ENCODE measurements at regions of chr9 and their contacts with region 1.

Region 1: DNA sequence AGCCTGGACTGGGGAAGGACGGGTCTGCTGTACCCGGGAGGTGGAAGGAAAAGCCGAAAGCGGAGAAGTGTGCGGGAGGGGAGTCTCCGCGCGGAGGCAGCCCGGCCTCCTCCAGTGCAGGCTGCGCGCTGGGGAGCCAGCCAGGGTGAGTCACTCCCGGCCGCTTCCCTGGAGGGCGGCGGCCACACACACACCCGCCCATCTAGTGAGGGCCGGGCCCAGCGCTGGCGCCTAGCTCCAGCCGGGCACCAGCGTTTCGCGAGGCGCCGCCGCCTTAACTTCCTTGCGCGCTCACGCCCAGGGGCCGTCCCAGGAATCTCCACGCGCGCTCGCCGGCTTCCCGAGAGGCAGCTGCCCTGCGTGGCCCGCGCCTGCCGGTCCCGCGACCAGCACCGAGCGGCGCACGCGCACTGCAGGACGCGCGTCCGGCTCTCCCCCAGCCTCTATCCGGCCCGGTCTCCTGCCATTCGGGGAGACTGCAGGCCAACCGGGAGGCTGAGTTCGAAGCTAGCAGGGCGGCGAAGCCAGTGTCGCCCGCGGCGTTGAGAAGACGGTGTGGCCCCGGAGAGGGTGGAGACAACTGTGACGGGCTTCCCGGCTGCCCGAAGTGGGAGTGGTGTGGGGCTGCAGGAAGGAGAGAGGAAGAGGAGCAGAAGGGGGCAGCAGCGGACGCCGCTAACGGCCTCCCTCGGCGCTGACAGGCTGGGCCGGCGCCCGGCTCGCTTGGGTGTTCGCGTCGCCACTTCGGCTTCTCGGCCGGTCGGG is at the start of gene JAK2:
- DNase-seq: peak in 1 of 2 donors; percentile 94
- H3K4me3 ChIP-seq: peak within 1 kb of the TSS; percentile 49 to 66
- H3K27ac ChIP-seq: peak within 1 kb of the TSS; percentile 94
- H3K4me1 ChIP-seq: peaks cover 38% of the 10 kb centered on the region
- H3K27me3 ChIP-seq: no peaks in the 10 kb centered on the region
- CTCF ChIP-seq: peak in 1 of 3 experiments; percentile 10
- POLR2A ChIP-seq: peak in 1 of 2 donors; percentile 51
- total RNA-seq, gene JAK2: 25.8 TPM

Region 2: GRCh38 chr9:4679268-4680172 is 305.3 kb before region 1 on chr9 and contains the start of gene CDC37L1:
- intact Hi-C with region 1: loop called (anchors 10 kb)
- DNase-seq: peak; percentile 98
- H3K4me3 ChIP-seq: peak within 1 kb of the TSS; percentile 77 to 94
- H3K27ac ChIP-seq: peak within 1 kb of the TSS; percentile 98
- H3K4me1 ChIP-seq: peaks cover 33% of the 10 kb centered on the region
- H3K27me3 ChIP-seq: no peaks in the 10 kb centered on the region
- CTCF ChIP-seq: peak in 2 of 3 experiments; percentile 13 to 77
- POLR2A ChIP-seq: peak; percentile 50 to 98
- total RNA-seq, gene CDC37L1: 23.8 TPM

Region 3: DNA sequence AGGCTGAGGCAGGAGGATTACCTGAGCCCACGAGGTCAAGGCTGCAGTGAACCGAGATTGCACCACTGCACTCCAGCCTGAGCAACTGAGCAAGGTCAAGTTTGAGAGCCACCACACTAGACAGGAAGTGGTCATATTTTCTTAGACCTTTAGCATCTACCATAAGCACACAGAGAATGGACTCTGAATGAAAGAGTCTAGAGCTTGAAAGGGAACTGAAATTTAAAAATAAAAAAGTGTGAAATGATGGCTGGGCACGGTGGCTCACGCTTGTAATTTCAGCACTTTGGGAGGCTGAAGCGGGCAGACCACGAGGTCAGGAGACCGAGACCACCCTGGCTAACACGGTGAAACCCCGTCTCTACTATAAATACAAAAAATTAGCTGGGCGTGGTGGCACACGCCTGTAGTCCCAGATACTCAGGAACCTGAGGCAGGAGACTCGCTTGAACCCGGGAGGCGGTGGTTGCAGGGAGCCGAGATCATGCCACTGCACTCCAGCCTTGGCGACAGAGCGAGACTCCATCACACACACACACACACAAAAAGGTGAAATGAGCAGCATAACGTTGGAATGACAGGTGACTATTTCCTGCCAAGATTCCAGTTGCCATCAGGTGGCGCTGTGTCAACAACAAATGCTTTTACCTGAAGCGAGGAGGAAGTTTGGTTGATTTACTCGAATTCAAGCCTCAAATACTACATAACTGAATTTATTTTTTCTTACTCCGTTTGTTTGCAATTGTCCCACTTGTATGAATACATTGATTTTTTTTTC is 222.5 kb before region 1 on chr9:
- intact Hi-C with region 1: loop called (anchors 5 kb)
- DNase-seq: no peak
- H3K4me3 ChIP-seq: peak overlapping the region; percentile 11 to 21
- H3K27ac ChIP-seq: peak overlapping the region; percentile 3
- H3K4me1 ChIP-seq: peaks cover 17% of the 10 kb centered on the region
- H3K27me3 ChIP-seq: no peaks in the 10 kb centered on the region
- CTCF ChIP-seq: peak; percentile 75 to 84 (median 81)
- POLR2A ChIP-seq: no peak

Region 4: DNA sequence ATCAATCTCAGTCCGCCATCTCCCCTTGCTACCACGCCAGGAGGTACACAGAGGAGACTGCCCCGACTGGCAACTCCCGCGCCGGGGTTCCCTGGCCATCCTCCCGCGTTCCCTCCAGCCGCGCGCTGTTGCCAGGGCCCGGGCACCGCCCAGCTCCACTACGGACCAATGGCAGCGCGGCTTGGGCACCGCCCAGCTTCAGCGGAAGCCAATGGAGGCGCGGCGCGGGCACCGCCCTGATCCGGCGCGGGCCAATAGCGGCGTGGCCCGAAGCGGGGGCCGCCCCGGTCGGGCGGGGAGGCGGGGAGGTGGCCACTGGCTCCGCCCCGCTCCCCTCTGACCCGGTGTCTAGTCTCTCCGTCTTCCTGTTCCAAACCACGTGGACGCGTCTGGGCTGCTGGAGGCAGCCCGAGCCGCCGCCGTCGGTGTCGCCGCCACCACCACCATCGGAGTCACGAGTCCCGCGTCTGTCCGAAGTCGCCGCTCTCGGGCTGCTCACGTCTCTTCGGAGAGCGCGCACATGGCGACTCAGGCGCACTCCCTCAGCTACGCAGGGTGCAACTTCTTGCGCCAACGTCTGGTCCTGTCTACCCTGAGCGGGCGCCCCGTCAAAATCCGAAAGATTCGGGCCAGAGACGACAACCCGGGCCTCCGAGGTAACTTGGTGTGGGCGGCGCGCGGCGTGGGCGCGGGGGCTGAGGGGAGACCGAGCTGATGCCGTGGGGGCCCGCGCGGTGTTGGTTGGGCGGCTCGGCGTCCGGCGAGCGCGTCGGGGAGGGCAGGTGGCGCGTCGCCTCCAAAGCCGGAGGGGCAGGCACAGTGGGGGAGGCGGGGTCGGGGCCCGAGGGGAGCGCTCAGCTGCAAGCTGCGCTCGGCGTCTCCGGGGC is 192.0 kb before region 1 on chr9 and contains the start of gene RCL1:
- intact Hi-C with region 1: loop called (anchors 5 kb)
- DNase-seq: peak in 1 of 2 donors; percentile 96
- H3K4me3 ChIP-seq: peak within 1 kb of the TSS; percentile 81 to 89
- H3K27ac ChIP-seq: peak within 1 kb of the TSS; percentile 77
- H3K4me1 ChIP-seq: peaks cover 33% of the 10 kb centered on the region
- H3K27me3 ChIP-seq: no peaks in the 10 kb centered on the region
- CTCF ChIP-seq: no peak
- POLR2A ChIP-seq: peak in 1 of 2 donors; percentile 64
- total RNA-seq, gene RCL1: 24.8 TPM

Region 5: DNA sequence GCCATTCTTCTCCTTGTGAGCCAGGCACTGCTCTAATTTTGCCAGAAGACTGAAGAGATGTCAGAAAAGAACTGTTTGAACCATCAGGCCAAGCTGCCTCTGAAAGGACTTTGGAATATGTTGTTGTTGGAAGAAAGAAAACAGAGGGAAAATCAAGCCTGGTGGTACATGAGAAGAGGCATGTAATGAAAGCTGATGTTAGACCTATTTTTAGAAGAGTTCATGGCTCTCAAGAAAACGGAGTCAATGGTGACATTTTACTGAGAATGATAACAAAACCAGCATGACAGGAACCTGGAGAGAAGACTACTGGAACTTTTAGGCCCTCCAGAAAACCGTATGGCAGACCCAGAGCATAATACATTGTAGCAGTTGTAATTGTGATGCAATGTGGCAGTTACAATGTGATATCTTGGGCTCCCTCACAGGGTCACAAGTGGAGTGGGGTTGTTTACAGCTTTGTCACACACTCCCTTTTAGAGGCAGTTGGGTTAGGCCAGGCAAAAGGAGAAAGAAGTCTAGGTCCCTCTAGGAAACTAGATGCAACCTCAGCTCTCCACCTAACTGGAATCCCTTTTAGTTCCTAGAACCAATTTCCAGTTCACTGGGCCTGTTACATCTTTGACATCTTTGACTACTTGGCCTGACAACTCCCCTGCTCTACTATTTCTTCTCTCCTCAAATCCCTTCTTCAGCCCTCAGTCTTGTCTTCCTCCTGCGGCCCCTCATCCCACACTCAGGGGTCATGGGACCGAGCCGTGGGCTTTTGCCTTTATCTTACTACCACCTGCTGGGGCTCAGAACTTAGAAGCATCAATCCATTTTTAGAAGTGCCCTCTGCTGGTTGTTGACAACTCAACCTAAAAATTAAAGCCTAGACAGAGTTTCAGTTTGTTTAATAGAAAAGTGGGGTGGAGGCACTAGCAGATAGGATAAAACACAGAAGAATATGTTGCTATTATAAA is 60.9 kb before region 1 on chr9:
- intact Hi-C with region 1: loop called (anchors 10 kb)
- DNase-seq: no peak
- H3K4me3 ChIP-seq: no peak overlapping the region
- H3K27ac ChIP-seq: no peak overlapping the region
- H3K4me1 ChIP-seq: no peaks in the 10 kb centered on the region
- H3K27me3 ChIP-seq: no peaks in the 10 kb centered on the region
- CTCF ChIP-seq: no peak
- POLR2A ChIP-seq: no peak

Measured in vagina (tissue), 2 donors.